Activated naive CD4-positive, alpha-beta T cell treated with anti-CD3 and anti-CD28 coated beads for 36 hours (primary cell): ENCODE measurements at regions of chr2 and their contacts with region 1.

Region 1: GRCh38 chr2:206800506-206801417 is 35.4 kb downstream of the FASTKD2 start:
- DNase-seq: peak; percentile 70
- H3K4me3 Mint-ChIP-seq: no peak overlapping the region
- H3K27ac Mint-ChIP-seq: no peak overlapping the region
- H3K4me1 Mint-ChIP-seq: peaks cover 31% of the 10 kb centered on the region
- H3K27me3 Mint-ChIP-seq: no peaks in the 10 kb centered on the region

Region 2: DNA sequence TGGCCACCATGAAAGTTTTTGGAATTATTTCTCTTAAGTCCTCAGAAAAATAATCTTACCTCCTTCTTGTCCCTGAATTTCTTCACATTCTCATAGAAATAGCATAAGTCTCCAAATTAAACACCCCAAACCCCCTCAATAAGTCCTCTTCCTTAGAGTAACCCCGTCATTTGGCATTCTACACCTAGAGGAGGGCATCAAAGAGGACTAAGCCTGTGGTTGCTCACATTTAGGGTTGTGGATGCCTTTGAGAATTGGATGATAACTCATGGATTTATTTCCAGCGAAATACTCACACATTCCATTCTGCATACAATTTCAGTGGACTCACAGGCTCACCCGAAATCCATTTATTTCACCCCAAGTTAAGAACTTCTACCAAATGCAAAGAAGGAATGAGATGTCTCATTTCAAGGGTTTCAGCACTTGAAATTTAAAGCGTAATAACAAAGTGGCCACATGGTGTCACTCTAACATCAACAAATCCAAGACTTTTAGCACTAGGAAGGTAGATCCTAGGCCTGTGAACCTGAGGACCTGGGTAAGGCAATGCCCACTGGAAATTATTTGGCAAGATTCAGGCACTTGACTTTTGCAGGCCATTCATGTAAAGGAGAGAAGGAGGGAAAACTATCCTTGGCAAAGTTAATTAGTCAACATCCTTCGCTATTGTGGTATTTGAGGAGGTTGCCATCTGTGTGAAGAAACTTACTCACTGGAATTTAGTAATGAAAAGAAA is 107.2 kb before region 1 on chr2:
- CTCF ChIA-PET with region 1: interaction called, 4 read pairs
- intact Hi-C with region 1: loop called (anchors 1 kb)
- DNase-seq: peak; percentile 48
- H3K4me3 Mint-ChIP-seq: no peak overlapping the region
- H3K27ac Mint-ChIP-seq: no peak overlapping the region
- H3K4me1 Mint-ChIP-seq: peaks cover 3% of the 10 kb centered on the region
- H3K27me3 Mint-ChIP-seq: no peaks in the 10 kb centered on the region

Region 3: DNA sequence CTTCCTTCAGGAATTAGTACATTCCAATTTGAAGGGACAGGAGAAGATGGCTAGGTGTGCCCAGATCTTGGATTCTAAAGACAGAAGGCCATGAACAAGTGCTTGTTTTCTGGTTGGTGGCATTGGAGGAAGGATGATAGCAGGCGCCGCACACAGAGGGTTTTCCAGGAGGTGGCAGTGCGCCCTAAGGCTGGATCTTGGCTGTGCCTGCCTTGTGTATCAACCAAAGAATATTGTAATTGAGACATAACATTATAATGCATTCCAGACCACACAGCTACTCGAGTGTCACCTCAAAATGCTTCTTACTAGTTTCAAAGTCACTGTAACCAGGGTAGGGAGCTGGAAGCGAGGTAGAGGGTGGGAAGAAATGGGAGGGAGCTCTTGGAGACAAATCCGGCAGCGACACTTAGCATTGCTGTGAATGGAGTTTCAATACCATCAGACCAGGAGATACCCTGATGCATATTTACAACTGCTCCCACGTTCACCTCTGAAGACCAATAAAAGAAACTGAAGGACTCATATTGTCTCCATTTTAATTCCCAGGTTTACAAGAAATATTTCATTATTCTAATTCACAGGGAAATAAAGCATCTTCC is 181.1 kb after region 1 on chr2:
- CTCF ChIA-PET with region 1: interaction called, 6 read pairs
- intact Hi-C with region 1: loop called (anchors 1 kb)
- DNase-seq: peak; percentile 73
- H3K4me3 Mint-ChIP-seq: no peak overlapping the region
- H3K27ac Mint-ChIP-seq: no peak overlapping the region
- H3K4me1 Mint-ChIP-seq: peaks cover 14% of the 10 kb centered on the region
- H3K27me3 Mint-ChIP-seq: no peaks in the 10 kb centered on the region

Region 4: DNA sequence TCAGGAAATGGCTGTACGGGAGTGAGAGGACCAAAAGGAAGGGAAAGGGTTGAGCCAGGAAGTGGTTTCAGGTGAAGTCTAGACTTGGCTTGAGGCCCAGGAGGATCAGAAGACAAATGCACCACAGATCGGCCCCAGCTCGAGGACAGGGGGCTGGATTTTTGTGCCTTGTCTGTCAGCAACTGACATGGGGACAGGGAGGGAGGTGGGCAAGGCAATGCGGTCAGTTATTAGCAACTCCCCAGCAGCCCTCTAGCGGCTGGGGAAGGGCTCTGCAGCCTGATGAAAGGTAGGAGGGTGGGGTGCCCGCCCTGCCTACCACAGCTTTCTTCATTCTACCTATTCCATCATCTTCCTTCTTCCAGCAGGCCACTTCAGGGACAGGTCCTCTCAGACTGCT is 188.5 kb after region 1 on chr2:
- CTCF ChIA-PET with region 1: interaction called, 7 read pairs
- intact Hi-C with region 1: loop called (anchors 2 kb)
- DNase-seq: peak; percentile 28
- H3K4me3 Mint-ChIP-seq: peak overlapping the region; percentile 13
- H3K27ac Mint-ChIP-seq: peak overlapping the region; percentile 23
- H3K4me1 Mint-ChIP-seq: peaks cover 31% of the 10 kb centered on the region
- H3K27me3 Mint-ChIP-seq: no peaks in the 10 kb centered on the region

Region 5: DNA sequence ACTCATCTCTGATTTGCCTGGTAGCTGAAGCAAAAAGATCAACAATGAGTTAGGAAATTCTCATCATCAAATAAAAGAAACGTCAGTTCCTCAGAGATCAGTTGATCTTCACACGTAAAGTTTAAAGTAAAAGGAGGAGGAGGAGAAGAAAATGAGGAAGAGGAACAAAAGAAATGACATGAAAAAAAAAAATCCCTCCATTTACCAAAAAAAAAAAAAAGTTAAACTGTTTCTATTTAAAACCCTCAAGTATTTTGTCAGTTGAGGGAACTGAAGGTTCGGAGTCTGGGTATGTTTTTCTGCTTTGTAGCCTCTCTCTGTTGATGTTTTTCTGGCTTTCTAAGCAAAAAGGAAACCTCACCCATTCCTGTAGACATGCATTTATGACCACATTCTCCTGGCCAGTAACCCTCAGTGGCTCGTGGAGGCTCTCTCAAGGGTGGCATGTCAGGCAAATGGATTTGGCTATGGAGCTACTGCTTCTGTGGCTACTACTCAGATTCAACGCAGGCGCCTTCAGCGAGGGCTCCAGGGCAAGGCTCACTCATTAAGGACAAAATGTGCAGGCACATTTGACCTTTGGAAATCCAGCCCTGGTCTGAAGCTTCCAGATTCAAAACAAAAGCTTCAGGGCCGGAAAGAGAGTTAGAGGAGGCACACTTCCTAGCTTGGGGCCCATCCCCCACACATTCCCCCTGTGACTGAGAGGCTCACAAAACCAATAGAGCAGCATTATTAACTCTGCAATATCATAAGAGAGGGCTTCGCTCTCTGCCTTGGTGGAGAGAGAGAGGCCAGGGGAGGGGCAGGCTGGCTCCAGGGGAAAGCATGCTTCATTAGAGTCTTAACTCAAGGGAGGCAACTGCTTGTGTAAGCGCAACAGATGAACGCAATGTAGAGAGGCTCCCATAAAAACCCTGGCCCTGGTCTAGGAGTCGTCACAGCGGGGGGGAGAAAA is 342.7 kb after region 1 on chr2:
- CTCF ChIA-PET with region 1: no interaction called
- intact Hi-C with region 1: loop called (anchors 5 kb)
- DNase-seq: peak; percentile 78
- H3K4me3 Mint-ChIP-seq: peak overlapping the region; percentile 64
- H3K27ac Mint-ChIP-seq: peak overlapping the region; percentile 92
- H3K4me1 Mint-ChIP-seq: peaks cover 68% of the 10 kb centered on the region
- H3K27me3 Mint-ChIP-seq: no peaks in the 10 kb centered on the region

Region 6: GRCh38 chr2:207352978-207353671 is 552.4 kb after region 1 on chr2:
- CTCF ChIA-PET with region 1: no interaction called
- intact Hi-C with region 1: loop called (anchors 1 kb)
- DNase-seq: peak; percentile 65
- H3K4me3 Mint-ChIP-seq: no peak overlapping the region
- H3K27ac Mint-ChIP-seq: no peak overlapping the region
- H3K4me1 Mint-ChIP-seq: peaks cover 8% of the 10 kb centered on the region
- H3K27me3 Mint-ChIP-seq: no peaks in the 10 kb centered on the region